Dorsolateral prefrontal cortex (tissue), 120 donors: ENCODE measurements at regions of chr9 and their contacts with region 1.

Region 1: DNA sequence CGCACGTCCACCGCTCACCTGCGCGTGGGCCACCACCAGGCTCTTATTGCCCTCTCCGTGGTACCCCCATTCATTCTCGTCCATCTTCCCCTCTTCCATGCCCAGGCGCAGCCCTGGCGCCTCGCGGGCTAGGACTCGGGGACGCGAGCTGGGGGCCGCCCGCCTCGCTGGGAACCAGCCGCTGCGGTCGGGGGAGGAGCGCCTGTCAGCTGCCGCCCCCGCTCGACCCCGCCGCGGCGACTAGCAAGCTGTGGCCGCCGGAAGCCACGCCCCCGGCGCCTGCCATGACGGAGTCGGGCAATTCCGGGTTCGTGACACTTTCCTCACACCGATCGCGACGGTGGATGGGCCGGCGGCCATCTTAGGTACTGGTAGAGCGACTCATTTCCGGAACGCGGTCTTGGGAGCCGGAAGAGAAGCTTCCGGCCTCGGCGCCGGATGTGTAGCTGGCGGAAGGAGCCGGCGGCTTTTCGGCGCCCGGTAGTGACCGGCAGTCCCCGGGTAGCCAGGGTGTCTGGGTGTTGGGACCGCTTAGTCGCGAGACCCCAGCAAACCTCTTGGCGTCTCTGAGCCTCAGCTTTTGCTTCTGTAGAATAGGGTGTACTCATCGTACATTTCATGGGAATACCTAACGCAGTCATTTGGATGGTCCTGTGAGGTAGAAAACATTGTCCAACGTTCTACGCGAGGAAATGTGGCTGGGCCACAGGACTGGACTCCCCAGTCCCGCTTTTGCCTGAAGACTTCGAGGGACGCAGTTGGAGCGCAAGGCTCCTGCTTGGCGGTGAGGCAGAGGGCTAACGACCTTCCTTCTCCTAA is at the start of gene IPPK:
- DNase-seq: peak; percentile 95 to 99 (median 98)
- H3K4me3 ChIP-seq: peak within 1 kb of the TSS; percentile 68 to 100 (median 94)
- H3K27ac ChIP-seq: peak within 1 kb of the TSS; percentile 36 to 94 (median 86)
- H3K27me3 ChIP-seq: no peaks in the 10 kb centered on the region
- CTCF ChIP-seq: peak in 39 of 56 donors; percentile 12 to 58 (median 32)
- total RNA-seq, gene IPPK: 10.7 to 26.7 (median 16.0) TPM

Region 2: DNA sequence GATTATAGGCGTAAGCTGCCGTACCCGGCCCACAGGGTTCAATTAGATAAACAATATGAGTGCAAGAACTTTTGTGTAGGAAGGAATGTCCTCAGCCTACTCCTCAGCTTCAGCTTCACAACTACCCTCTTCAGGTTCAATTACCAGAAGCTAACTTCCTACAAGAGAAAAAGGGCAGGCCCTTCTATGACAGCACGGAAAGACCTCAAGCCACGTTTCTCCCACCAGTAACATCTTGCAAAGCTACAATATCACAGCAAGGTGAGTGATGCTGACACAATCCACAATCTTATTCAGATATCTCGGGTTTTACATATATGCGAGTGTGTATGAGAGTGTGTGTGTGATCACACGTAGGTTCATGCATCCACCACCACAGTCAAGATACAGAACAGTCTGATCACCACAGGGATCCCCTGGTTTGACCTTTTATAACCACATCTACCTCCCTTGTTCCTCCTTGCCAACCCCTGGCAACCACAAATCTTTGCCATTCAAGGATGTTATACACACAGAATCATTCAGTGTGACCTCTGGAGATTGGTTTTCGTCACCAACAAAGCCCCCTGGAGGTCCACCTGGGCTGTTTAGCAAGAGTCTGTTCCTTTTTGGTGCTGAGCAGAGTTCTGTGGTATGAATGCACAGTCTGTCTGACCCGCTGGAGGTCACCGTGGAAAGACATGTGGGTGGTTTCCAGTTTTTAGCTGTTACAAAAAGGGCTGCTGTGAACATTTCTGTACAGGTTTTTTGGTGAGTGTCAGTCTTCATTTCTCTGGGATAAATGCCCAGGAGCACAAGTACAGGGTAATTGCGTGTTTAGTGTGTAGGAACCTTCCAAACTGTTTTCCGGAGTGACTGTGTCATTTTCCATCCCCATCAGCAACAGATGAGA is 38.4 kb before region 1 on chr9:
- intact Hi-C with region 1: no loop called
- DNase-seq: peak in 2 of 10 donors; percentile 16 to 33
- H3K4me3 ChIP-seq: no peak overlapping the region
- H3K27ac ChIP-seq: peak overlapping the region in 2 of 59 donors; percentile 4 to 17
- H3K27me3 ChIP-seq: no peaks in the 10 kb centered on the region
- CTCF ChIP-seq: no peak

Region 3: DNA sequence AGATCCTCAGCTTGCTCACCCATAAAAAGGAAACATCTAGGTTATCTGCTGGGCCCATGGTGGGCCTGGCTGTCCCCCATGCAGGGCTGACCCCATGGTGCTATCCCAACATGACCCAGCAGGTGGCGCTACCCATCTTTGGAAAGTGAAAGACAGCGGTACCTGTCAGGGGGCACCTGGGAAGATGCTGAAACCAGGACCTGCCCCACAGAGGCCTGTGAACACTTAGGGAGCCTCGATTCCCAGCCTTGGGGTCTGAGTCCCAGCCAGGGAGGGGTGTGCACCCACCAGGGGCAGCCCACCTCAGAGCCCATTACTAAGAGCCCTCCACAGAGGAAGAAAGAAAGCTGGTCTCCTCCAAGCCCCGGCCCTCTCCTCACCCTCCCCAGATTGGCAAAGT is 46.5 kb after region 1 on chr9:
- intact Hi-C with region 1: loop called in 1 of 2 experiments (anchors 5 kb)
- DNase-seq: peak in 7 of 10 donors; percentile 59 to 72 (median 66)
- H3K4me3 ChIP-seq: no peak overlapping the region
- H3K27ac ChIP-seq: no peak overlapping the region
- H3K27me3 ChIP-seq: no peaks in the 10 kb centered on the region
- CTCF ChIP-seq: peak; percentile 63 to 98 (median 92)

Region 4: DNA sequence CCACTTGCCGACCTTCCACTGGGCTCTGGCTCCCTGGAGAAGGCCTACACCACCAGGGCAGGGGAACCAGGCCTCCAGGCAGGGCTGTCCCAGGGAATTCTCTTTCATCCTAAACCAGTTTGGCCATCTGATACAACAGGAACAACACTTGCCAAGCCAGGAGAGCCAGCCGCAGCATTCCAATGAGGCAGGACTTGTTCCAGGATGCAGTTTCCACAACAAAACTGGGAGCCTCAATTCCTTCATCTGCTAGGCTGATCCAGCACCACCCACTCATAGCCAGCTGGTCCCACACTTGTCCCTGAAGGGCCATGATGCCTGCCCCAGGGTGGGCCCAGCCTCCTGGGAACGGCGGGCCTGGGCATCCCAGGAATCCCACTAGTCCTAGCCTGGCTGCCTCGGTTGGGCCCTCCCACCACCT is 68.6 kb after region 1 on chr9:
- intact Hi-C with region 1: no loop called
- DNase-seq: peak in 4 of 10 donors; percentile 52 to 73 (median 59)
- H3K4me3 ChIP-seq: no peak overlapping the region
- H3K27ac ChIP-seq: peak overlapping the region in 50 of 59 donors; percentile 0 to 85 (median 64)
- H3K27me3 ChIP-seq: no peaks in the 10 kb centered on the region
- CTCF ChIP-seq: no peak

Region 5: GRCh38 chr9:92764988-92765936 is 95.2 kb after region 1 on chr9:
- intact Hi-C with region 1: loop called (anchors 1 to 2 kb)
- DNase-seq: peak; percentile 97 to 100 (median 99)
- H3K4me3 ChIP-seq: peak overlapping the region; percentile 45 to 99 (median 91)
- H3K27ac ChIP-seq: peak overlapping the region; percentile 81 to 100 (median 98)
- H3K27me3 ChIP-seq: no peaks in the 10 kb centered on the region
- CTCF ChIP-seq: peak; percentile 77 to 99 (median 93)

Region 6: GRCh38 chr9:92877531-92878430 is 207.7 kb after region 1 on chr9 and contains the start of gene ZNF484:
- intact Hi-C with region 1: loop called (anchors 5 kb)
- DNase-seq: peak; percentile 92 to 98 (median 96)
- H3K4me3 ChIP-seq: peak within 1 kb of the TSS; percentile 56 to 90 (median 75)
- H3K27ac ChIP-seq: peak within 1 kb of the TSS; percentile 53 to 95 (median 81)
- H3K27me3 ChIP-seq: no peaks in the 10 kb centered on the region
- CTCF ChIP-seq: peak in 29 of 56 donors; percentile 4 to 56 (median 28)
- total RNA-seq, gene ZNF484: 15.5 to 31.6 (median 21.1) TPM

Region 7: GRCh38 chr9:93020771-93021670 is 350.9 kb after region 1 on chr9:
- intact Hi-C with region 1: no loop called
- DNase-seq: peak in 5 of 10 donors; percentile 6 to 39 (median 15)
- H3K4me3 ChIP-seq: no peak overlapping the region
- H3K27ac ChIP-seq: no peak overlapping the region
- H3K27me3 ChIP-seq: no peaks in the 10 kb centered on the region
- CTCF ChIP-seq: no peak